ENCODE measurements at regions of chr11 and their contacts with region 1.

Region 1: GRCh38 chr11:134050541-134051383 is 18.1 kb upstream of the JAM3 start:
- DNase-seq: peak; percentile 37 to 46
- ATAC-seq: peak; percentile 47 to 49
- H3K4me3 ChIP-seq: peak overlapping the region in 2 of 4 donors; percentile 26 to 37
- H3K27ac ChIP-seq: no peak overlapping the region
- H3K4me1 ChIP-seq: peaks cover 12 to 15% of the 10 kb centered on the region in 2 donors
- H3K27me3 ChIP-seq: no peaks in the 10 kb centered on the region
- CTCF ChIP-seq: peak; percentile 88 to 95 (median 91)
- POLR2A ChIP-seq: no peak

Region 2: GRCh38 chr11:133927690-133928627 is 122.8 kb before region 1 on chr11:
- in situ Hi-C with region 1: loop called in 1 of 4 experiments (anchors 5 kb)
- intact Hi-C with region 1: loop called (anchors 1 kb)
- DNase-seq: peak in 1 of 2 donors; percentile 38
- ATAC-seq: peak; percentile 75 to 83
- H3K4me3 ChIP-seq: peak overlapping the region in 1 of 4 donors; percentile 24
- H3K27ac ChIP-seq: no peak overlapping the region
- H3K4me1 ChIP-seq: peaks cover 2 to 4% of the 10 kb centered on the region in 2 donors
- H3K27me3 ChIP-seq: no peaks in the 10 kb centered on the region
- CTCF ChIP-seq: peak; percentile 65 to 88 (median 83)
- POLR2A ChIP-seq: no peak

Region 3: GRCh38 chr11:133966921-133967598 is 83.7 kb before region 1 on chr11:
- in situ Hi-C with region 1: no loop called
- intact Hi-C with region 1: loop called (anchors 2 kb)
- DNase-seq: no peak
- ATAC-seq: peak in 1 of 2 donors; percentile 54
- H3K4me3 ChIP-seq: peak overlapping the region in 2 of 4 donors; percentile 33
- H3K27ac ChIP-seq: no peak overlapping the region
- H3K4me1 ChIP-seq: peaks cover 5 to 7% of the 10 kb centered on the region in 2 donors
- H3K27me3 ChIP-seq: peaks cover 0 to 4% (median 2%) of the 10 kb centered on the region in 3 donors
- CTCF ChIP-seq: peak in 4 of 5 experiments; percentile 22 to 67 (median 48)
- POLR2A ChIP-seq: no peak

Region 4: GRCh38 chr11:134068829-134069425 is 18.2 kb after region 1 on chr11 and contains the start of gene JAM3:
- in situ Hi-C with region 1: no loop called
- intact Hi-C with region 1: no loop called
- DNase-seq: peak; percentile 60 to 79
- ATAC-seq: peak; percentile 73 to 84
- H3K4me3 ChIP-seq: peak within 1 kb of the TSS; percentile 54 to 74 (median 64)
- H3K27ac ChIP-seq: peak within 1 kb of the TSS; percentile 57 to 78 (median 67)
- H3K4me1 ChIP-seq: peaks cover 0 to 9% of the 10 kb centered on the region in 2 donors
- H3K27me3 ChIP-seq: peaks cover 19 to 24% (median 22%) of the 10 kb centered on the region in 3 donors
- CTCF ChIP-seq: no peak
- POLR2A ChIP-seq: peak; percentile 46 to 73
- total RNA-seq, gene JAM3: 3.5 to 9.7 (median 6.2) TPM

Region 5: DNA sequence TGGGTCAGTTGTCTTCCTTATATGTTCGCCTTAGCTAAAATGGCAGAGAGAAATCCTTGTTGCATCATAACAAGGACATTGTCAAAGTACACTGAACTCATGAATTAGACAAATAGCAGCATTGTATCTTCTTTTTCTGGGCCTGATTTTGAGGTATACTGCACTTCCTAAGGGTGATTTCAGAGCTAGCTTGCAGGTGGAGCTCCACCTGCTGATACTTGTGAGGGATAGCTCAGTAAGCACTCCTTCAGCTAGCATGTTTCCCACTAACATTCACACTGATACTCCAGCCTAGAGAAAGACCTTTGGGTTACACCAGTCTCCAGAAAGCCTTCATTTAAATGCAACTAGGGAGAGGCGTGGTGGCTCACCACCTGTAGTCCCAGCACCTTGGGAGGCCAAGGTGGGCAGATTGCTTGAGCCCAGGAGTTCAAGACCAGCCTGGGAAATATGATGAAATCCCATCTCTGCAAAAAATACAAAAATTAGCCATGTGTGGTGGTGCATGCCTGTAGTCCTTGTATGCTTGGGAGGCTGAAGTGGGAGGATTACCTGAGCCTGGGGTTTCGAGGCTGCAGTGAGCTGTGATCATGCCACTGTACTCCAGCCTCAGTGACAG is 47.9 kb after region 1 on chr11:
- in situ Hi-C with region 1: no loop called
- intact Hi-C with region 1: no loop called
- DNase-seq: no peak
- ATAC-seq: no peak
- H3K4me3 ChIP-seq: no peak overlapping the region
- H3K27ac ChIP-seq: no peak overlapping the region
- H3K4me1 ChIP-seq: no peaks in the 10 kb centered on the region
- H3K27me3 ChIP-seq: no peaks in the 10 kb centered on the region
- CTCF ChIP-seq: no peak
- POLR2A ChIP-seq: no peak

Region 6: DNA sequence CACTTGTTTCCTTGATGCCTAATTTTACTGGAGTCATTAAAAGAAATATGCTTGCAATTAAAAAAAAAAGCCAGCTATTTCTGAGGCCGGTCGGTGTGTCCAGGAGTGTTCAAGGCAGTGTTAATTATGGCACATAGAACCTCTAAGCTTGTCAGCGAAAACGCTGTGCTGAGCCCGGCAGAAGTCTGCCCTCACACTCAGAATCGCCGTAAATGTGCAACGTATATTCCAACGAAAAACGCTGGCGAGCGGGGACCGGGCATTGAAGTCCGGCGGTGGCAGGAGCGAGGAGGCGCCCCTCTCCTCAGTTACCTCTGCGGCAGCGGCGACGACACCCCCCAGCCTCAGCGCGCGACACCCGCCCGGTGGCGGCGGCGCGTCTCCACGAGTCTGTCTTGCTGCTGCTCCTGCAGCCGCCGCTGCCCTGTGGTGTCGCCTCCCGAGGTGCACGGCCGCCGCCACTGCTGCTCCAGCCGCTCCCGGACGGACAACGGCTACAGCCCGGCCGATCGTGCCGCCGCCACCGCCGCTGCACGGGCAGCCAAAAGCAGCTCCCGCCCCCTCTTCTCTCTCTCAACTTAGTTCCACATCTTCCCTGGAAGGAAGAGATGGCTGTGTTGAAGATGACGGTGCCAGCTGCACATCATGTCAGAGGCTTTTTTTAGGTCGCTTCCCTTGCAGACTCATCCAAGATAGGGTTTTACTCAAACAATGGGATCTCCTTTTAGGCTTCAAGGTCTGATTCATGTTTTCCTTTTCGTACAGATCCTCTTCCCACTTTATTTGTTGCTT is 74.1 kb after region 1 on chr11:
- in situ Hi-C with region 1: loop called in 1 of 4 experiments (anchors 10 kb)
- intact Hi-C with region 1: loop called (anchors 5 kb)
- DNase-seq: peak in 1 of 2 donors; percentile 36
- ATAC-seq: peak; percentile 50 to 72
- H3K4me3 ChIP-seq: peak overlapping the region; percentile 52 to 59 (median 54)
- H3K27ac ChIP-seq: peak overlapping the region; percentile 52 to 70 (median 60)
- H3K4me1 ChIP-seq: peaks cover 32 to 43% of the 10 kb centered on the region in 2 donors
- H3K27me3 ChIP-seq: peaks cover 0 to 3% (median 0%) of the 10 kb centered on the region in 3 donors
- CTCF ChIP-seq: peak in 2 of 5 experiments; percentile 15 to 16
- POLR2A ChIP-seq: peak; percentile 20 to 21

Region 7: GRCh38 chr11:134223836-134224709 is 173.3 kb after region 1 on chr11 and contains the starts of genes NCAPD3 and VPS26B:
- in situ Hi-C with region 1: no loop called
- intact Hi-C with region 1: loop called (anchors 5 kb)
- DNase-seq: peak; percentile 93 to 96
- ATAC-seq: peak; percentile 93
- H3K4me3 ChIP-seq: peak within 1 kb of the TSS; percentile 78 to 88 (median 85)
- H3K27ac ChIP-seq: peak within 1 kb of the TSS; percentile 89 to 98 (median 98)
- H3K4me1 ChIP-seq: peaks cover 32 to 37% of the 10 kb centered on the region in 2 donors
- H3K27me3 ChIP-seq: no peaks in the 10 kb centered on the region
- CTCF ChIP-seq: peak in 1 of 5 experiments; percentile 9
- POLR2A ChIP-seq: peak; percentile 99 to 100
- total RNA-seq, gene NCAPD3: 3.6 to 6.7 (median 4.5) TPM
- total RNA-seq, gene VPS26B: 15.4 to 32.9 (median 22.2) TPM